ENCODE measurements at regions of chr12 and their contacts with region 1.

Region 1: DNA sequence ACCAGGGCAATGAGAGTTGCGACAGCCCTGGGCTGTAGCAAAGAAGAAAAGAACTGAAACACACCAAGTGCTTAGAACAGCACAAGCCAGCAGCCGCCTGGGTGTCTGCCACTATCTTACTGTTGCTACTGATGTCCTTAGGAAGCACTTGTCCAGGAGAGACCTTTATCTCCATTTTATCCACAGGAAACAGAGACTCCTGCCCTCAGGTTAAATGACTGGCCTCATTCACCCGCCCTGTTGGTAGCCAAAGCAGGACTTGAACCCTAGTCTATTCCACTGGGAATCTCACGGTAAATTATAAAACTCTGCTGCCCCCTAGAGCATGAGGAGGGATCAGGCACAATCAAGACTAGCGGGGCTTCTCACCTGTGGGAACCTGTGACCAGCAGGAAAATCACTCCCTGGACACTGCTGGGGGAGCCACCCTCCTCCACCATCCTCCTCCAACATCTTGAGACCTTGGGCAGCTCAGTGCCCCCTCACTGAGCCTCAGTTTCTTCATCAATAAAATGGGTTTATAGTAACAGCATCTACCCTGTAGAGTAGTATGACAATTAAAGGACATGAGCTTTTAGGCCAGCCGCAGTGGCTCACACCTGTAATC is 20.5 kb upstream of the TESC start:
- DNase-seq: peak; percentile 74
- CTCF ChIP-seq: peak; percentile 67

Region 2: GRCh38 chr12:116703214-116703795 is 416.4 kb before region 1 on chr12:
- in situ Hi-C with region 1: loop called (anchors 10 kb)
- DNase-seq: peak; percentile 76
- CTCF ChIP-seq: peak; percentile 91

Region 3: GRCh38 chr12:117025481-117026151 is 94.1 kb before region 1 on chr12:
- in situ Hi-C with region 1: loop called (anchors 10 kb)
- DNase-seq: peak; percentile 81
- CTCF ChIP-seq: peak; percentile 84

Region 4: DNA sequence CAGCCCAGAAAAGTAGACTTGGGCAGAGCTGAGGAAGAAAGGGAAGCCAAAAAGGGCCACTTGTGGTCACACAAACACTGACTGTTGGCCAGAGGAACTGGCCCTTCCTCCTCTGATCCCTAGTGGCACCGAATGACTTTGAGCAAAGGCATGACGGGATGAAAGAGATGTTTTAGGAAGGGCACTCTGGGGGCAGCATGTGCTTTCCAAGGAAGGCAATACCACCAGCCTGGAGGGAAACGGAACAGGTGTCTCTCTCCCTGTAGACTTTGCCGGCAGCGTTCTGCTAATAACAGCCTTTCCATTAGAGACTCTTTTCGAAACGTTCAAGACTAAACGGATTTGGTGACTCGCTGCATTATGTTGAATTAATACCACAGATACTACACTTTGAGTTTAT is 82.9 kb after region 1 on chr12:
- in situ Hi-C with region 1: no loop called
- DNase-seq: no peak
- CTCF ChIP-seq: no peak

Measured in GM13976 (cell line).